Activated T-helper 2 cell treated with anti-CD3 and anti-CD28 coated beads, Interferon-gamma antibody, Interleukin-2, Interleukin-4, amounts not matched to agents 10 μg/mL and 5 μg/mL and 100 μg/mL, durations not matched to agents 14 hours and 24 hours and 36 hours (primary cell): ENCODE measurements at regions of chr5 and their contacts with region 1.

Region 1: DNA sequence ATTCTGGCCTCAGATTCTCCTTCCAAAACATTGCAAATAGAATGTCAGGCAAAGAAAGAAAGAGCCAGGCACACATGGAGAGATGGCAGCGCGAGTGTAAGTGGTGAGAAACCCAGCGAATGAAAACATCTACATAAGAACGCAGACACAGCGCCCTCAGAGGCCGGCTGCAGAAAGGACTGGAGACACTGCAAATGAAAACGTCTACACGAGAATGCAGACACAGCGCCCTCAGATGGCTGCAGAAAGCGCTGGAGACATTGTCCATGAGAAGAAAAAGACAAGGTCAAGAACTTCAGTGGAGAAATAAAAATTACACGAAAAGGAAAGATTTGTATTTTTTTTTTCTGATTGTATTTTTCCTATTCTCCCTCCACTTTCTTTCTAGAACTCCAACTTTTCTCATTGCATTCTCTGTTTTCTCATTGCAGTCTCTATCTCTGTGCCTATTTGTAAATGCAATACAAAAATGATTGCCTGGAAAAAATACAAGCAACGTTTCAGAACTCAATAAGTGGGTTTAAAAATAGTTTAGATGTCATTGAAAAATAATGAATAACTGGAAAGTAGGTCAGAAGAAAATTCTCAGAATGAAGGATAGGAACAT is 117.9 kb upstream of the LPCAT1 start:
- DNase-seq: peak; percentile 75
- H3K4me3 Mint-ChIP-seq: no peak overlapping the region
- H3K27ac Mint-ChIP-seq: no peak overlapping the region
- H3K4me1 Mint-ChIP-seq: peaks cover 10% of the 10 kb centered on the region
- H3K27me3 Mint-ChIP-seq: peaks cover 34% of the 10 kb centered on the region

Region 2: GRCh38 chr5:923281-923873 is 718.3 kb before region 1 on chr5:
- intact Hi-C with region 1: loop called (anchors 10 kb)
- DNase-seq: peak; percentile 69
- H3K4me3 Mint-ChIP-seq: no peak overlapping the region
- H3K27ac Mint-ChIP-seq: peak overlapping the region; percentile 4
- H3K4me1 Mint-ChIP-seq: peaks cover 21% of the 10 kb centered on the region
- H3K27me3 Mint-ChIP-seq: peaks cover 21% of the 10 kb centered on the region

Region 3: GRCh38 chr5:1217596-1218206 is 424.0 kb before region 1 on chr5:
- intact Hi-C with region 1: no loop called
- DNase-seq: no peak
- H3K4me3 Mint-ChIP-seq: no peak overlapping the region
- H3K27ac Mint-ChIP-seq: no peak overlapping the region
- H3K4me1 Mint-ChIP-seq: no peaks in the 10 kb centered on the region
- H3K27me3 Mint-ChIP-seq: no peaks in the 10 kb centered on the region

Region 4: GRCh38 chr5:1315709-1316587 is 325.7 kb before region 1 on chr5:
- intact Hi-C with region 1: loop called (anchors 10 kb)
- DNase-seq: peak; percentile 68
- H3K4me3 Mint-ChIP-seq: peak overlapping the region; percentile 69
- H3K27ac Mint-ChIP-seq: peak overlapping the region; percentile 92
- H3K4me1 Mint-ChIP-seq: peaks cover 55% of the 10 kb centered on the region
- H3K27me3 Mint-ChIP-seq: no peaks in the 10 kb centered on the region

Region 5: GRCh38 chr5:1479581-1480188 is 162.0 kb before region 1 on chr5:
- intact Hi-C with region 1: loop called (anchors 1 kb)
- DNase-seq: no peak
- H3K4me3 Mint-ChIP-seq: no peak overlapping the region
- H3K27ac Mint-ChIP-seq: no peak overlapping the region
- H3K4me1 Mint-ChIP-seq: peaks cover 2% of the 10 kb centered on the region
- H3K27me3 Mint-ChIP-seq: no peaks in the 10 kb centered on the region

Region 6: DNA sequence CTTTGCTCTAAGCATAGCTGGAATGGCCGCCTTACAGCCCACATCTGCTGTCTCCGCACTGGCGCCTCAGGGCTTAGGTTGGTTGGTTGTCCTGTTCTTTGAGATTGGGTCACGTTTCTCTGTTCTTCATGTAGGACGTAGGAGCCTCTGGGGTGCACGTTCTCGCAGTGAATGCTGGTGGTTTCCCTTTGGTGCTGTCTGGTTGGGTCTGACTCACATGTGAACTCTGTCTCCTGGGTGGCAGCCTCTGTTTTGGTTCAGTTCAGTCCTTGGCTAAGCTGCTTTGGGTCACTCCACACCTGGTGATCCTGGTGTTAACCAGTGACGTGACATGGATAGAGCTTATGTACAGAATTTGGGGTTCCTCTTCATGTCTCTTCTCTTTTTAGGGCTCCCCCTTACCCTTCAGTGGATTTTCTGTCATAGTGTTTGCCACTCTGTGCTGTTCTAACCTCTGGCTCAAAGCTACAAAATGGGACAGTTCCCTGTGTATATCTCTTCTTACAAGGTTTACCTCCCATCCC is 105.3 kb before region 1 on chr5:
- intact Hi-C with region 1: no loop called
- DNase-seq: peak; percentile 51
- H3K4me3 Mint-ChIP-seq: peak overlapping the region; percentile 69
- H3K27ac Mint-ChIP-seq: peak overlapping the region; percentile 65
- H3K4me1 Mint-ChIP-seq: peaks cover 22% of the 10 kb centered on the region
- H3K27me3 Mint-ChIP-seq: peaks cover 26% of the 10 kb centered on the region

Region 7: DNA sequence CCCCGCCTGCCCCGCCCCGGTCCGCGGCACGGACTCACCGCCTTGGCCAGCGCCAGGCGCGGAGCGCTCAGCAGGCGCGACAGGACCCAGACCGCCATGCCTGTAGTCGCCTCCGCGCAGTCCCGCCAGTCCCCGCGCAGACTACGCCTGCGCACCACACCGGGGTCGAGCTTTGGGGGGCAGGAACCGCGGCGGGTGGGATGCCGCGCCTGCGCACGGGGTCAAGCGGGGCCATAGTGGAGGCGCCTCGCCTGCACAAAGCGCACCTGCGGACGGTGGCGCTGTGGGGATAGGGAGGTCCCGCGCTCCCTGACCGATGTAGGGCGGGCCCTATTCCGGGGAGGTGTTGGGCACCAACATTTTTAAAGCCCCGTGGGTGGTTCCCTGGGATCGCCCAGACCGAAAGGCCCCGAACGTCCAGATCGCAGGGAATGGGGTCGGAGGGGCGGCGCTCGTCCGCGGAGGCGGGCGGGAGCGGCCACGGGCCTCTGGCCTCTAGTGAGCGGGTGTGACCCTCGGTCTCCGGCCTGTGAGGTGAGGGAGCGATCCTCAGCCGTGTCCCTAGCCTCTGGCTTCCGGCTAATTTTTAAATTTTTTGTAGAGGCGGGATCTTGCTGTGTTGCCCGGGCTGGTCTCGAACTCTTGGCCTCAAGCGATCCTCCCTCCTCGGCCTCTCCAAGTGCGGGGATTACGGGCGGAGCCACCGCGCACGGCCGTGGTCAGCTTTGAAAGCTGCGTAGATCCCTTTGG is 47.1 kb before region 1 on chr5:
- intact Hi-C with region 1: loop called (anchors 5 kb)
- DNase-seq: peak; percentile 53
- H3K4me3 Mint-ChIP-seq: peak overlapping the region; percentile 68
- H3K27ac Mint-ChIP-seq: no peak overlapping the region
- H3K4me1 Mint-ChIP-seq: peaks cover 5% of the 10 kb centered on the region
- H3K27me3 Mint-ChIP-seq: no peaks in the 10 kb centered on the region